CD4-positive, alpha-beta memory T cell (primary cell): ENCODE measurements at regions of chr2 and their contacts with region 1.

Region 1: GRCh38 chr2:96320728-96321622 is 4.1 kb upstream of the ITPRIPL1 start:
- DNase-seq: peak in 2 of 5 donors; percentile 5 to 6
- H3K4me3 ChIP-seq: peak overlapping the region; percentile 76 to 77
- H3K4me3 Mint-ChIP-seq: peak overlapping the region; percentile 88 to 95 (median 92)
- H3K27ac ChIP-seq: peak overlapping the region; percentile 72
- H3K27ac Mint-ChIP-seq: peak overlapping the region; percentile 50 to 97 (median 89)
- H3K4me1 ChIP-seq: peaks cover 64% of the 10 kb centered on the region
- H3K4me1 Mint-ChIP-seq: peaks cover 37 to 75% (median 59%) of the 10 kb centered on the region in 4 donors
- H3K27me3 ChIP-seq: no peaks in the 10 kb centered on the region
- H3K27me3 Mint-ChIP-seq: no peaks in the 10 kb centered on the region

Region 2: GRCh38 chr2:96305091-96305978 is 15.6 kb before region 1 on chr2 and contains the start of gene SNRNP200:
- CTCF ChIA-PET with region 1: interaction called, 12 read pairs
- POLR2A ChIA-PET with region 1: interaction called, 134 read pairs
- intact Hi-C with region 1: loop called (anchors 1 kb)
- DNase-seq: peak; percentile 91 to 95 (median 91)
- H3K4me3 ChIP-seq: peak within 1 kb of the TSS; percentile 80 to 99
- H3K4me3 Mint-ChIP-seq: peak within 1 kb of the TSS; percentile 97 to 100 (median 99)
- H3K27ac ChIP-seq: peak within 1 kb of the TSS; percentile 89
- H3K27ac Mint-ChIP-seq: peak within 1 kb of the TSS; percentile 98 to 100 (median 100)
- H3K4me1 ChIP-seq: peaks cover 48% of the 10 kb centered on the region
- H3K4me1 Mint-ChIP-seq: peaks cover 44 to 65% (median 54%) of the 10 kb centered on the region in 4 donors
- H3K27me3 ChIP-seq: no peaks in the 10 kb centered on the region
- H3K27me3 Mint-ChIP-seq: no peaks in the 10 kb centered on the region
- total RNA-seq, gene SNRNP200: 225 to 227 TPM

Region 3: GRCh38 chr2:96608469-96609455 is 287.8 kb after region 1 on chr2:
- CTCF ChIA-PET with region 1: no interaction called
- POLR2A ChIA-PET with region 1: no interaction called
- intact Hi-C with region 1: no loop called
- DNase-seq: no peak
- H3K4me3 ChIP-seq: no peak overlapping the region
- H3K4me3 Mint-ChIP-seq: no peak overlapping the region
- H3K27ac ChIP-seq: no peak overlapping the region
- H3K27ac Mint-ChIP-seq: peak overlapping the region in 4 of 7 donors; percentile 1 to 22 (median 13)
- H3K4me1 ChIP-seq: no peaks in the 10 kb centered on the region
- H3K4me1 Mint-ChIP-seq: peaks cover 0 to 9% (median 3%) of the 10 kb centered on the region in 4 donors
- H3K27me3 ChIP-seq: no peaks in the 10 kb centered on the region
- H3K27me3 Mint-ChIP-seq: no peaks in the 10 kb centered on the region